Right ventricle myocardium inferior (tissue), 1 donor: ENCODE measurements at regions of chr22 and their contacts with region 1.

Region 1: GRCh38 chr22:17158568-17159503 is at the start of gene HDHD5:
- DNase-seq: peak; percentile 98
- ATAC-seq: peak; percentile 91
- total RNA-seq, gene HDHD5: 58.9 TPM

Region 2: DNA sequence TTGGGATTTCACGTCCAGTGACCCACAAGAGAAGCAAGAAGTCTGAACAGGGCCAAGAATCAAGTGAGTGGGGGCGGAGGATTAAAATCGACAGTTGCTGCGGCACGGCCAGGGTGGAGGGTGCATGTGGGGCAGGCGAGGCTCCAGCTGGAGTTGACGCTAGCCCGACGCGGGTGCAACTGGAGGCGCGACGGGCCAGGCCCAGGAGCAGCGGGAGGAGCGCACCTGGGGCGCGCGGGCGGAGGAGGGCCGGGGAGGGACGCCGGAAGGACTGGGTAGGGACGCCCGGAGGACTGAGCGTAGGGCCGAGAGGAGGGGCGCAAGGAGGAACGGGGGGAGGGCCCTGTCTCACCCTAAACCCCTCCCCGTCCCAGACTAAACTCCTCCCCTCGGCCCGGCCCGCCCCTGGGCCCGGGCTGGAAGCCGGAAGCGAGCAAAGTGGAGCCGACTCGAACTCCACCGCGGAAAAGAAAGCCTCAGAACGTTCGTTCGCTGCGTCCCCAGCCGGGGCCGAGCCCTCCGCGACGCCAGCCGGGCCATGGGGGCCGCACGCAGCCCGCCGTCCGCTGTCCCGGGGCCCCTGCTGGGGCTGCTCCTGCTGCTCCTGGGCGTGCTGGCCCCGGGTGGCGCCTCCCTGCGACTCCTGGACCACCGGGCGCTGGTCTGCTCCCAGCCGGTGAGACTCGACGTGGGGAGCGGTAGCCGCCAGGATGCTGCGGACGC is 74.1 kb before region 1 on chr22 and contains the start of gene IL17RA:
- intact Hi-C with region 1: loop called (anchors 1 kb)
- DNase-seq: peak; percentile 95
- ATAC-seq: peak; percentile 99
- total RNA-seq, gene IL17RA: 10.9 TPM

Region 3: GRCh38 chr22:17121227-17122195 is 37.3 kb before region 1 on chr22 and contains the start of gene TMEM121B:
- intact Hi-C with region 1: loop called (anchors 2 kb)
- DNase-seq: peak; percentile 91
- ATAC-seq: peak; percentile 79
- total RNA-seq, gene TMEM121B: 2.2 TPM